ENCODE measurements at regions of chr19 and their contacts with region 1.

Region 1: DNA sequence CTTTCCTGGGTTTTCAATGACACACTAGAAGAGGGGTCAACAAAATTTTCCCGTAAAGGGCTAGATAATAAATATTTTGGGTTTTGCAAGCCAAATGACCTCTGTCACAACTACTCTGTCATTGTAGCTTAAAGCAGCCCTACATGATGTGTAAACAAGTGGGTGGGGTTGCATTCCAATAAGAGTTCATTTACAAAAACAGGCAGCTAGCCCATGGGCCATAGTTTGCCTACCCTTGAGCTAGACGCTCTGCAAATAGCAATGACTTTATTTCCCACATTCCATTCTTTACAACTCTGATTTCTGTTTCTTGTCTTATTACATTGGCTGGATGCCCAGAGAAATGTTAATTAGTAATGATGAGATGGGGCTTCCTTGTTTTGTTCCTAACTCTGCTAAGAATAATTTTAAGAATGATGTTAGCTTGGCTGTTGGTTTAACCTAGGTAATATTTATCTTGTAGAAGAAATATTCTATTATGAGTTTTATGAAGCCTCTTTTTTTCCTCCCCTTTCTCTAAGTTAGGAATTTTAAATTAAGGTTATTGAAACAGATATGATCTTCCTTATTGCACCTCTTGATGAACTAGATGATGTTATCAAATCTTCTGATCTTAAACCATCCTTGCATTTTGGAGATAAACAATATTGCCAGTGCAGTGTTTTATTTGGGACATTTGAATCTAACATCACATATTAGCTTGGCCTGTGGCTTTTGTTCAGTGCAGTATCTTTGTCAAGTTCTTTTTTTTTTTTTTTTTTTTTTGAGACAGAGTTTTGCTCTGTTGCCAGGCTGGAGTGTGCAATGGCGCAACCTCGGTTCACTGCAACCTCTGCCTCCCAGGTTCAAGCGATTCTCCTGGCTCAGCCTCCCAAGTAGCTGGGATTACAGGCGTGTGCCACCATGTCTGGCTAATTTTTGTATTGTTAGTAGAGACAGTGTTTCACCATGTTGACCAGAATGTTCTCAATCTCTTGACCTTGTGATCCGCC is 76.3 kb downstream of the ZNF557 start:
- DNase-seq: no peak
- ATAC-seq: no peak
- H3K4me3 ChIP-seq: no peak overlapping the region
- H3K27ac ChIP-seq: no peak overlapping the region
- H3K4me1 ChIP-seq: no peaks in the 10 kb centered on the region
- H3K27me3 ChIP-seq: no peaks in the 10 kb centered on the region
- CTCF ChIP-seq: no peak
- POLR2A ChIP-seq: no peak
- RAD21 ChIP-seq: no peak

Region 2: DNA sequence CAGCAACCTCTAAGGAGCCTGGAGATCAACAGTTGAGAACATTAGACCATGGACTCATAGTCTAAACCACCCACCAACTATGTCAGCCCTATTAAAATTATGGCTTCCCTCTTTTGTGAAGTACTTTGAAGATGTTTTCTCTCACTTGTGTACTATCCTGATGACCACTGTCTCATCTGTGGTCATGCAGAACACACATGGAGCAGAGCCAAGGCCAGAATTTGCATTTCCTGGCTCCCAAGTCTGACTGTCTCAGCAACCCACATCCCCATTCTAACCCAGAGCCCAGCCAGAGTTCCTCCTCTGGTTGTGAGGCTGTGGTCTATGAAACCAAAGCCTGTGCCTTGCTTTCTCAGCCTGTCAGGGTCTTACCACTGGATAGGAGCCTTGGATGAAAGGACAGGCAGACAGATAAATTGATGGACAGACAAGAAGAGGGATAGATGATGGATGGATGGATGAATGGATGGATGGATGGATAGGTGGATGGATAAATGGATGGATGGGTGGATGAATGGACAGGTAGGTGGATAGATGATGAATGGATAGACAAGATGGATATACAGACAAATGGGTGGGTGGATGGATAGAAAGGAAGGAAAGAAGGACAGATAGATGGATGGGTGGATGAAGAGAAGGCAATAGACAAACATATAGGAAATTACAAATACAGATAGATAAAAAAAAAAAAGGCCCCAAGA is 40.9 kb before region 1 on chr19:
- CTCF ChIA-PET with region 1: interaction called, 5 read pairs
- POLR2A ChIA-PET with region 1: no interaction called
- dilution Hi-C with region 1: no loop called
- in situ Hi-C with region 1: no loop called
- intact Hi-C with region 1: loop called (anchors 1 kb)
- DNase-seq: no peak
- ATAC-seq: no peak
- H3K4me3 ChIP-seq: no peak overlapping the region
- H3K27ac ChIP-seq: no peak overlapping the region
- H3K4me1 ChIP-seq: no peaks in the 10 kb centered on the region
- H3K27me3 ChIP-seq: peaks cover 2% of the 10 kb centered on the region; the same call in 1 of the 2 replicates
- CTCF ChIP-seq: no peak
- POLR2A ChIP-seq: no peak
- RAD21 ChIP-seq: no peak

Region 3: DNA sequence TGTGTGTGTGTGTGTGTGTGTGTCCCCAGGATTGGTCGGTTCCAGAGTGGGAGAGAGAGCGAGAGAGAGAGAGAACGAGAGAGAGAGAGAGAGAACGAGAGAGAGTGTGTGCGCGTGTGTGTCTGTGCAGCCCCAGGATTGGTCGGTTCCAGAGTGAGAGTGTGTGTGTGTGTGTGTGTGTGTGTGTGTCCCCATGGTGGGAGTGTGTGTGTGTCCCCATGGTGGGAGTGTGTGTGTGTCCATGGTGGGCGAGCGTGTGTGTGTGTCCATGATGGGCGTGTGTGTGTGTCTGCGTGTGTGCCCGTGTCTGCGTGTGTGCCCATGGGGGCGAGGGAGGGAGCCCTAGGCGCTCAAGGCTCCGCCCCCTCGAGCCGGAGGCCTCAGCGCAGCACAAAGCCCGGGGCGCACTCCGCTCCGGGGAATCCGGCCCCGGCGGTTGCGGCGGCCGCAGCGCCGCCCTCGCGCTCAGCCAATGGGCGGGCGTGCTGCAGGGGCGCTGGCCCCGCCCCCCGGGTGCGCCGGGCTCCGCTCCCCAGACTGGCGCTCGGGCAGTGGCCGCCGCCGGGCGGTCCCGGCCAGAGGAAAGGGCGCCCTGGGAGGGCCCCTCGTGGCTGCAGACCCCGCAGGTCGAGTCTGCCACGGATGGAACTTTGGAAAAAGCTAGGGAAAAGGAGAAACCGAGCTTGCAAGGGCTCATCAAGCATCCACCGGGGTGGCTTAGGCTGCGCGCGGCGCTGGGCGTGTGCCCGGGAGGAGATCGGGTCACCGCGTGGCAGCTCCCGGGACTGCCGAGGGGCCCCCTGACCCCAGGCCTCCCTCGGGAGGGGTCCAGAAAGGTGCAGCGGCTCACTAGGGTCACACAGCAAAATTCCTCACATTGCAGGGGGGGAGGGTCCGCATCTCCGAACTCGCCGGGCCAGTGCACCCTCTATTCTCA is 52.2 kb after region 1 on chr19:
- CTCF ChIA-PET with region 1: no interaction called
- POLR2A ChIA-PET with region 1: no interaction called
- dilution Hi-C with region 1: no loop called
- in situ Hi-C with region 1: no loop called
- intact Hi-C with region 1: loop called (anchors 5 kb)
- DNase-seq: peak; percentile 94
- ATAC-seq: peak; percentile 94
- H3K4me3 ChIP-seq: peak overlapping the region; percentile 85
- H3K27ac ChIP-seq: peak overlapping the region; percentile 78
- H3K4me1 ChIP-seq: no peaks in the 10 kb centered on the region
- H3K27me3 ChIP-seq: no peaks in the 10 kb centered on the region
- CTCF ChIP-seq: 0 out of 2 replicates have a peak, but pooled peaks have one; percentile 0
- POLR2A ChIP-seq: peak; percentile 54; the same call in 1 of the 2 replicates
- RAD21 ChIP-seq: no peak

Region 4: GRCh38 chr19:7293795-7294570 is 148.2 kb after region 1 on chr19 and contains the start of gene INSR:
- CTCF ChIA-PET with region 1: no interaction called
- POLR2A ChIA-PET with region 1: no interaction called
- dilution Hi-C with region 1: no loop called
- in situ Hi-C with region 1: no loop called
- intact Hi-C with region 1: loop called (anchors 2 kb)
- DNase-seq: peak; percentile 84
- ATAC-seq: peak; percentile 99
- H3K4me3 ChIP-seq: peak within 1 kb of the TSS; percentile 59
- H3K27ac ChIP-seq: peak within 1 kb of the TSS; percentile 49; the same call in 1 of the 2 replicates
- H3K4me1 ChIP-seq: peaks cover 3% of the 10 kb centered on the region; the same call in 1 of the 2 replicates
- H3K27me3 ChIP-seq: no peaks in the 10 kb centered on the region; the same call in 1 of the 2 replicates
- CTCF ChIP-seq: no peak
- POLR2A ChIP-seq: no peak
- RAD21 ChIP-seq: no peak
- total RNA-seq, gene INSR: 7.9 and 8.3 TPM in 2 replicates

Region 5: DNA sequence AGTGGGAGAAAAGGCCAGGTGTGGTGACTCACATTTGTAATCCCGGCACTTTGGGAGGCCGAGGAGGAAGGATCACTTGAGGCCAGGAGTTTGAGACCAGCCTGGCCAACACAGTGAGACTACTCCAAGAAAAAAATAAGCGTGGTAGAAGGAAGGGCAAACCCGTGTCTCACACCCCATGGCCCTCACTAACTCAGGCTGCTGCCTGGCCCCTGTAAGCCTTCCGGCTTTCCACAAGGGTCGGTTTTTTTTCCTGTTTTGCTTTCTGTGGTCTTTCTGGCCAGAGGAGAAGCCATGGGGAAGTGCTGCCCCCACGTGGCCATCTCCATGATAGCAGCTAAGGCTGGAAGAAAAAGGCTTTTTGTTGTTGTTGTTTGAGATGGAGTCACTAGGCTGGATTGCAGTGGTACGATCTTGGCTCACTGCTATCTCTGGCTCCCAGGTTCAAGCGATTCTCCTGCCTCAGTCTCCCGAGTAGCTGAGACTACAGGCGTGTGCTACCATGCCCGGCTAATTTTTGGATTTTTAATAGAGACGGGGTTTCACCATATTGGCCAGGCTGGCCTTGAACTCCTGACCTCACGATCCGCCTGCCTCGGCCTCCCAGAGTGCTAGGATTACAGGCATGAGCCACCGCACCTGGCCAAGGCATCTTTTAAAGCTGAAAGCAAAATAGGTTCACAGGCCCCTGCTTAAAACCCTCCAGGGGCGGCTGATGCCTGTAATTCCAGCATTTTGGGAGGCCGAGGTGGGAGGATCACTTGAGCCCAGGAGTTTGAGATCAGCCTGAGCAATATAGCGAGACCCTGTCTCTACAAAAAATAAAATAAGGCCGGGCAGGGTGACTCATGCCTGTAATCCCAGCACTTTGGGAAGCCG is 195.4 kb after region 1 on chr19:
- CTCF ChIA-PET with region 1: interaction called, 4 read pairs
- POLR2A ChIA-PET with region 1: no interaction called
- dilution Hi-C with region 1: no loop called
- in situ Hi-C with region 1: no loop called
- intact Hi-C with region 1: loop called (anchors 1 kb)
- DNase-seq: peak; percentile 64
- ATAC-seq: peak; percentile 95
- H3K4me3 ChIP-seq: no peak overlapping the region
- H3K27ac ChIP-seq: no peak overlapping the region
- H3K4me1 ChIP-seq: no peaks in the 10 kb centered on the region
- H3K27me3 ChIP-seq: peaks cover 6% of the 10 kb centered on the region; the same call in 1 of the 2 replicates
- CTCF ChIP-seq: peak; percentile 97
- POLR2A ChIP-seq: peak; percentile 48; the same call in 1 of the 2 replicates
- RAD21 ChIP-seq: peak; percentile 98

Region 6: DNA sequence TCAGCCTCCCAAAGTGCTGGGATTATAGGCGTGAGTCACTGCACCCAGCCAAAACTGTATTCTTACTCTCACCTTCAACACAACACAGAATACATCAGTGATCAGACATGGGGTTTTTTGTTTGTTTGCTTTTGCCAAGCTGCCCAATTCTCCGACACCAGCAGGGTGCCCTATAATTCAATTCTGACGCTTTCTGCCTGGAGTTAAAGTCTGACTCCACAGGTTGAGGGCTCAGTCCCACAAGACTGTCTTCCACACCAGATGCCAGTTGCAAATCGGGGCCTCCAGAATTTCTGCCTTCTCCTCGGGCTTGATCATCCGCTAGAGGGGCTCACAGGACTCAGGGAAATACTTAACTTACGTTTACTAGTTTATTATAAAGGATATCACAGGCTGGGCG is 981.5 kb after region 1 on chr19:
- CTCF ChIA-PET with region 1: no interaction called
- POLR2A ChIA-PET with region 1: interaction called, 11 read pairs
- dilution Hi-C with region 1: no loop called
- in situ Hi-C with region 1: no loop called
- intact Hi-C with region 1: no loop called
- DNase-seq: no peak
- ATAC-seq: no peak
- H3K4me3 ChIP-seq: no peak overlapping the region
- H3K27ac ChIP-seq: no peak overlapping the region
- H3K4me1 ChIP-seq: no peaks in the 10 kb centered on the region
- H3K27me3 ChIP-seq: peaks cover 6% of the 10 kb centered on the region; the same call in 1 of the 2 replicates
- CTCF ChIP-seq: no peak
- POLR2A ChIP-seq: no peak
- RAD21 ChIP-seq: no peak